HCT116 (cell line): ENCODE measurements at regions of chr22 and their contacts with region 1.

Region 1: GRCh38 chr22:36065775-36066559 is 37.3 kb upstream of the RBFOX2 start:
- DNase-seq: peak; percentile 91
- ATAC-seq: peak; percentile 93
- H3K4me3 ChIP-seq: peak overlapping the region; percentile 62 to 64
- H3K27ac ChIP-seq: peak overlapping the region; percentile 64
- H3K4me1 ChIP-seq: peaks cover 4 to 21% of the 10 kb centered on the region in 2 experiments; a peak in 3 of 4 replicates
- H3K27me3 ChIP-seq: no peaks in the 10 kb centered on the region
- CTCF ChIP-seq: peak; percentile 99 to 100 (median 100)
- POLR2A ChIP-seq: no peak
- RAD21 ChIP-seq: peak; percentile 84

Region 2: DNA sequence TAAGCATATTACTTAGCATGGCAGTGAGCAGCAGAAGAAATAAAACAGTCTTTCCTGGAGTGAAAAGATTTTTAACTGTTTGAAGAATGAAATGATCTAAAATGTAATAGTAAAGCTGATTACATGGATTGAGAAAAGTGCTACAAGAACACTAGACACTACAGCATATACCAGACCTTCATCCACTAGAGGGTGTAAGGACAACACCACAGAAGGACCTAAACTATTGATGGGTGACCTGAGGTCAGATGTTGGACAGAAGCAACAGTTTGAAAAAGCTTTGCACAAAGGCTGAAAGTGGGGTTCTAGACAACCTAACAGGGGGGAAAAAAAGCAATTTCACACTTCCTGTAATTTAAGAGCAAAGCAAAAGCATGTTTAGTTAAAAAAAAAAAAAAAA is 135.0 kb before region 1 on chr22:
- CTCF ChIA-PET with region 1: interaction called, 28 read pairs
- POLR2A ChIA-PET with region 1: no interaction called
- RAD21 ChIA-PET with region 1: interaction called in 1 of 2 experiments, 4 read pairs
- intact Hi-C with region 1: loop called (anchors 1 kb)
- DNase-seq: peak; percentile 44
- ATAC-seq: peak; percentile 85
- H3K4me3 ChIP-seq: no peak overlapping the region
- H3K27ac ChIP-seq: no peak overlapping the region
- H3K4me1 ChIP-seq: no peaks in the 10 kb centered on the region
- H3K27me3 ChIP-seq: no peaks in the 10 kb centered on the region
- CTCF ChIP-seq: peak; percentile 54 to 85 (median 64)
- POLR2A ChIP-seq: no peak
- RAD21 ChIP-seq: peak; percentile 81

Region 3: GRCh38 chr22:36028646-36029405 is 37.1 kb before region 1 on chr22 and contains the start of gene RBFOX2:
- CTCF ChIA-PET with region 1: interaction called, 19 read pairs
- POLR2A ChIA-PET with region 1: interaction called, 4 read pairs
- RAD21 ChIA-PET with region 1: interaction called in 1 of 2 experiments, 4 read pairs
- intact Hi-C with region 1: no loop called
- DNase-seq: peak; percentile 88
- ATAC-seq: peak; percentile 95
- H3K4me3 ChIP-seq: peak within 1 kb of the TSS; percentile 84 to 91
- H3K27ac ChIP-seq: peak within 1 kb of the TSS; percentile 74
- H3K4me1 ChIP-seq: peaks cover 7 to 26% of the 10 kb centered on the region in 2 experiments
- H3K27me3 ChIP-seq: no peaks in the 10 kb centered on the region
- CTCF ChIP-seq: no peak
- POLR2A ChIP-seq: peak; percentile 24
- RAD21 ChIP-seq: no peak
- total RNA-seq, gene RBFOX2: 83.9 TPM

Region 4: GRCh38 chr22:36052505-36053270 is 13.3 kb before region 1 on chr22:
- CTCF ChIA-PET with region 1: interaction called, 52 read pairs
- POLR2A ChIA-PET with region 1: interaction called, 7 read pairs
- RAD21 ChIA-PET with region 1: interaction called in 1 of 2 experiments, 5 read pairs
- intact Hi-C with region 1: no loop called
- DNase-seq: peak; percentile 77
- ATAC-seq: peak; percentile 97
- H3K4me3 ChIP-seq: peak overlapping the region; percentile 14 to 38; a peak in 2 of 4 replicates
- H3K27ac ChIP-seq: peak overlapping the region; percentile 86
- H3K4me1 ChIP-seq: peaks cover 21 to 49% of the 10 kb centered on the region in 2 experiments
- H3K27me3 ChIP-seq: no peaks in the 10 kb centered on the region
- CTCF ChIP-seq: no peak
- POLR2A ChIP-seq: no peak
- RAD21 ChIP-seq: no peak

Region 5: GRCh38 chr22:36081023-36081431 is 15.1 kb after region 1 on chr22:
- CTCF ChIA-PET with region 1: interaction called, 55 read pairs
- POLR2A ChIA-PET with region 1: interaction called, 3 read pairs
- RAD21 ChIA-PET with region 1: no interaction called
- intact Hi-C with region 1: no loop called
- DNase-seq: no peak
- ATAC-seq: no peak
- H3K4me3 ChIP-seq: no peak overlapping the region
- H3K27ac ChIP-seq: no peak overlapping the region
- H3K4me1 ChIP-seq: peaks cover 2 to 5% of the 10 kb centered on the region in 2 experiments; a peak in 3 of 4 replicates
- H3K27me3 ChIP-seq: no peaks in the 10 kb centered on the region
- CTCF ChIP-seq: no peak
- POLR2A ChIP-seq: no peak
- RAD21 ChIP-seq: no peak